Activated T-helper 2 cell treated with anti-CD3 and anti-CD28 coated beads, Interferon-gamma antibody, Interleukin-2, Interleukin-4, amounts not matched to agents 10 μg/mL and 5 μg/mL and 100 μg/mL, durations not matched to agents 14 hours and 24 hours and 36 hours (primary cell): ENCODE measurements at regions of chr6 and their contacts with region 1.

Region 1: GRCh38 chr6:112018619-112019416 is 35.1 kb upstream of the CCN6 start:
- DNase-seq: no peak
- H3K4me3 Mint-ChIP-seq: no peak overlapping the region
- H3K27ac Mint-ChIP-seq: no peak overlapping the region
- H3K4me1 Mint-ChIP-seq: peaks cover 68% of the 10 kb centered on the region
- H3K27me3 Mint-ChIP-seq: no peaks in the 10 kb centered on the region

Region 2: GRCh38 chr6:111220383-111221031 is 798.3 kb before region 1 on chr6:
- intact Hi-C with region 1: no loop called
- DNase-seq: no peak
- H3K4me3 Mint-ChIP-seq: no peak overlapping the region
- H3K27ac Mint-ChIP-seq: no peak overlapping the region
- H3K4me1 Mint-ChIP-seq: peaks cover 3% of the 10 kb centered on the region
- H3K27me3 Mint-ChIP-seq: no peaks in the 10 kb centered on the region

Region 3: GRCh38 chr6:111837641-111838500 is 180.9 kb before region 1 on chr6:
- intact Hi-C with region 1: no loop called
- DNase-seq: peak; percentile 59
- H3K4me3 Mint-ChIP-seq: peak overlapping the region; percentile 77
- H3K27ac Mint-ChIP-seq: peak overlapping the region; percentile 97
- H3K4me1 Mint-ChIP-seq: peaks cover 67% of the 10 kb centered on the region
- H3K27me3 Mint-ChIP-seq: no peaks in the 10 kb centered on the region

Region 4: DNA sequence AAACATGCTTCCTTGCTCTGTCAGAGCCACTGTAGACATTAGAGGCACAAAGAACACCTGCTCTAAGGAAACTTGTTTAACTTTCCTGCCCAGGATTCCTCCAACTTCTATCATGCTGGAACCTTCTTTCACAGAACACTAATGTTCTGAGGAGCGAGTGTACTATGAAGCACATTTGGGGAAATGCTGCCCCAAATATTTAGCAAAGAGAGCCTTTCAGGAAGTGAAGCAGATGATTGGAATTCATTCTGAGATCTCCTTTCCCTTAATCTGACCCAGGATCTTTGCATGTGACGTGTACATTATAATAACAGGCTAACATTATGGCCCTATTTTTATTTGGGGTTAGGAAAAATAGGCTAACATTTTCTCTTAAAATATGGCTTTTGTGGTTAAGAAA is 124.5 kb before region 1 on chr6:
- intact Hi-C with region 1: no loop called
- DNase-seq: no peak
- H3K4me3 Mint-ChIP-seq: no peak overlapping the region
- H3K27ac Mint-ChIP-seq: no peak overlapping the region
- H3K4me1 Mint-ChIP-seq: no peaks in the 10 kb centered on the region
- H3K27me3 Mint-ChIP-seq: peaks cover 12% of the 10 kb centered on the region

Region 5: DNA sequence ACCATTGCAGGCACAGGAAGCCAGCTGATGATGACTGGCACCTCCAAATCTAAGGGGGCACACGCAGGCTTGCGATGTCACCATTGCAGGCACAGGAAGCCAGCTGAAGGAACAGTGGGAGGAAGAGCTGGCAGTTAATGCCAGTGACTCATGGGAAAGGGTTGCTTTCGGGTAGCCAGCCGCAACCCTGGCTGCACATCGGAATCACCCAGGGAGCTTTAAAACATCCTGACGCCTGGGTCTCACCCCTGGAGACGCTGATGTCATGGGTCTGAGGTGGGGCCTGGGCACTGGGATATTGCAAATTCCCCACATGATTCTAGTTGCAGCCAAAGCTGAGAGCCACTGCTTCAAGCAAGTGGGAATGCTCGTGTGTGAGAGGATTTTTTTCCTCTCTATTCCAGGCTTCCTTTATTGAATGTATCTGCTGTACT is 19.0 kb after region 1 on chr6:
- intact Hi-C with region 1: loop called (anchors 1 kb)
- DNase-seq: no peak
- H3K4me3 Mint-ChIP-seq: no peak overlapping the region
- H3K27ac Mint-ChIP-seq: peak overlapping the region; percentile 29
- H3K4me1 Mint-ChIP-seq: peaks cover 67% of the 10 kb centered on the region
- H3K27me3 Mint-ChIP-seq: no peaks in the 10 kb centered on the region